ENCODE measurements at regions of chr1 and their contacts with region 1.

Region 1: DNA sequence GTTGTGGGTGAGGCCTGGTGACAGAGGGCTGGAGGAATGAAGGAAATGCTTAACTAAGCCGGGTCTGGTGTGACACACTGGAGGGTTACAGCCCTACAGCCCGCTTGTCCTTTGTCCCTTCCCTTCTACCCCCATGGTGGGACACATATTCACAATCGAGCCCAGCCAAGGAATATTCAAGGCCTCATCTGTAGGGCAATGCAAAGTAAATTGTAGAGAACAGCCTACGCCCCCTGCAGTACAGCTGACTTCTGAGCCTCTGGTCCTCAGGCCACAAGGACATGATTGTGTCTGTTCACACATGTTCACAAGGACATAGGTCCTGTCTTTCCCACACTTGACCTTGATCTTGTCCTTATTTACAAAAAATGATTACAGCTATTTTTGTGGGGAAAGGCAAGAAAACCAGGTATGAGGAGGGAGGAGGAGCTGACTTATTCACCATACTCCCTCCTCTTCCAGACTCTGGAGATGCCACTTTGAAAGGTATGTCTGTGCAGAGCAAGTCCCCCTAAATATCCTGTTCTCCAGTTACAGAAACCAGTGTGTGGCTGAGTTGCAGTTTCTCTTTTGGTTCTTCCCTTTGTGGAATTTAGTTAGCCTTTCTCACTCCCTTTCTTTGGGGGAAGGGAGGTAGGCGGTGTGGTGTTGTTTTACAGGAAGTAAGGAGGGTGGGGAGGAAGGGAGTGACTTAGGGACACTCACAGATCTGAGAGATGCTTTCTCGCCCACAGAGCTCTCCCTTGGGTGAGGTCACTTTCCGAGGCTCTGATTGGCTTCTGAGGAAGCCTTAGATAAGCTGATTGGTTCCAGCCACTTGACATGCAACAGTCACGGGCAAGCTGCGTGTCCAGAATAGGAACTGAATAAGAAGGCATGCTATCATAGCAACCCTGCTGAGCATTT is 14.6 kb downstream of the POLR3GL start:
- DNase-seq: peak; percentile 100
- H3K4me3 ChIP-seq: peak overlapping the region; percentile 31
- CTCF ChIP-seq: peak; percentile 42

Region 2: GRCh38 chr1:145765574-145765973 is 213.5 kb before region 1 on chr1:
- CTCF ChIA-PET with region 1: no interaction called
- POLR2A ChIA-PET with region 1: no interaction called
- DNase-seq: no peak
- H3K4me3 ChIP-seq: no peak overlapping the region
- CTCF ChIP-seq: no peak

Region 3: GRCh38 chr1:145804235-145805045 is 174.7 kb before region 1 on chr1:
- CTCF ChIA-PET with region 1: no interaction called
- POLR2A ChIA-PET with region 1: no interaction called
- DNase-seq: no peak
- H3K4me3 ChIP-seq: no peak overlapping the region
- CTCF ChIP-seq: no peak

Region 4: GRCh38 chr1:145963995-145964901 is 14.9 kb before region 1 on chr1 and contains the starts of genes ANKRD34A and POLR3GL:
- CTCF ChIA-PET with region 1: interaction called, 130 read pairs
- POLR2A ChIA-PET with region 1: interaction called, 15 read pairs
- DNase-seq: no peak
- H3K4me3 ChIP-seq: peak within 1 kb of the TSS; percentile 93
- CTCF ChIP-seq: no peak

Region 5: DNA sequence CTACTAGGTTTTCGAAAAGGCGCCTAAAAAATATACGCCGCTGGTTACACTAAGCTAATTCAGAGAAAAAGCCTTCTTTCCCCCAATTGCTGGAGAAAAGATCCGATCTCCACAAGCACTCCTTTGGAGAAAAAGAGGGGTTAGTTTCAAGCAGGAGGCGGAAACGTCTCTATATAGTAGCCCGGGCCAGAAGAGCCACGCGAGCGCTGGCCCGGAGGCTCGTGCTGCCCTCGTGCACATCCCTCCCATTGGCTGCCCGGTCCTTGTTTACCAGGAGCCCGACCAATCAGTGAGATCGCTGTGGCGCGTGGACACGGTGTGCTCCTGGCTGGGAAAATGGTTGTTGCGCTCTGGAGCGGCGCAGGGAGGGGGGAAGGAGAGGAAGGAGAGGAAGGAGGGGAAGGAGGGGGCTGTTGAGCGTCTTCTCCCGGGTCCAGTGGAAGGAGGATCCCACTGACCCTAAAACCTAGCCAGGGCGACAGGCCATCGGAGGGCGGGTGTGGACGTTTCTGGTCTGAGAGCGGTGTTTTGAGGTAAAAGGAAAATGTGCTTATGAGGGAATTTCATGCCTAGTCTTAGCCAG is 17.4 kb after region 1 on chr1 and contains the start of gene TXNIP:
- CTCF ChIA-PET with region 1: interaction called, 787 read pairs
- POLR2A ChIA-PET with region 1: interaction called, 3 read pairs
- DNase-seq: peak; percentile 77
- H3K4me3 ChIP-seq: peak within 1 kb of the TSS; percentile 90
- CTCF ChIP-seq: no peak

Region 6: DNA sequence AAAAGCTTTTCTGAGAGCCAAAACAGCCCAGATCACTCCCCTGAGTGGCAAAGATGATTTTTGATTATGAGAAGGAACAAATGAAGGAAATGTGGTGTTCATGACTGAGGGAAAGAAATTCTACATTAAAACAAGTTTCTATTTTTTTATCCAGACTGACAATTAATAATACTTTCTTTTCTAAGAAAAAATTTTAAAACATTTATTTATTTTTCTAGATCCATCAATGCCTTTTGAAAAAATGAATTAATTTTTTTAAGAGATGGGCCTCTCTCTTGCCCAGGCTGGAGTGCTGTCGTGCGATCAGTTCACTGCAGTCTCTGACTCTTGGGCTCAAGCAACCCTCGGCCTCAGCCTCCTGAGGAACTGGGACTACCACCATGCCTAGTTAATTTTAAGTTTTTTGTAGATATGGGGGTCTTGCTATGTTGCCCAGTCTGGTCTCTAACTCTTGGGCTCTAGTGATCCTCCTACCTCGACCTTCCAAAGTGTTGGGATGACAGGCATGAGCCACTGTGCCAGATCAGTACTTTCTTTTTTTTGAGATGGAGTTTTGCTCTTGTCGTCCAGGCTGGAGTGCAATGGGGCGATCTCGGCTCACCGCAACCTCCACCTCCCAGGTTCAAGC is 28.5 kb after region 1 on chr1:
- CTCF ChIA-PET with region 1: interaction called, 787 read pairs
- POLR2A ChIA-PET with region 1: interaction called, 10 read pairs
- DNase-seq: no peak
- H3K4me3 ChIP-seq: no peak overlapping the region
- CTCF ChIP-seq: no peak

Region 7: DNA sequence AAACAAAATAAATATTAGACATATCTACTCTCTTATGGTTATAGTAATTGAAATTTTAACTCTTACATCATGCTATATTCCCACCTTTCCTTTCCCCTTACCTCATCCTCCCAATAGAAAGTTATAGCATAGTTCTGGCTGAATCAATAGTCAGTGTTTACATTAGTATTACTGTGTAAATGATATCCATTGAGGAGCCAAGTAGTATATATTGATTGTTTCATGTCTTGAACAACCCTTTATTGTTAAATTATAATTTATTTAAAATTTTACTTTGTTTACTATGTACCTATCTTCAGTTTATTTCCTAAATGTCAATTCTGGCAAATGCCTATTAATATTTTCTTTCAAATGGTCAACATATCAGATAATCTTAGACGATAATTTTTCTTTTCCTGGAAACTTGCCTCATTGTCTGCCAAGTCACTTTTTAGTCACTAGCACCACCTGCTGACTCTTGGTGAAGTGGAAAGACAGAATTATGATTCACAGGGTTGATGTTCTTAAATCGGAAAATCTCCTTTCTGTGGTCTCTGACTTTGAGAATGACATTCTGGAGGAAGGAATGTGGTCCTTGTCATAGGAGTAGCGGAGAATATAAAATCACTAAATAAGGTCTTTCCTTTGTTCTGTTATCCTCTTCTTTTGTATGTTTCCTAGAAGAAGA is 33.8 kb after region 1 on chr1:
- CTCF ChIA-PET with region 1: interaction called, 787 read pairs
- POLR2A ChIA-PET with region 1: no interaction called
- DNase-seq: no peak
- H3K4me3 ChIP-seq: no peak overlapping the region
- CTCF ChIP-seq: peak; percentile 53

Region 8: DNA sequence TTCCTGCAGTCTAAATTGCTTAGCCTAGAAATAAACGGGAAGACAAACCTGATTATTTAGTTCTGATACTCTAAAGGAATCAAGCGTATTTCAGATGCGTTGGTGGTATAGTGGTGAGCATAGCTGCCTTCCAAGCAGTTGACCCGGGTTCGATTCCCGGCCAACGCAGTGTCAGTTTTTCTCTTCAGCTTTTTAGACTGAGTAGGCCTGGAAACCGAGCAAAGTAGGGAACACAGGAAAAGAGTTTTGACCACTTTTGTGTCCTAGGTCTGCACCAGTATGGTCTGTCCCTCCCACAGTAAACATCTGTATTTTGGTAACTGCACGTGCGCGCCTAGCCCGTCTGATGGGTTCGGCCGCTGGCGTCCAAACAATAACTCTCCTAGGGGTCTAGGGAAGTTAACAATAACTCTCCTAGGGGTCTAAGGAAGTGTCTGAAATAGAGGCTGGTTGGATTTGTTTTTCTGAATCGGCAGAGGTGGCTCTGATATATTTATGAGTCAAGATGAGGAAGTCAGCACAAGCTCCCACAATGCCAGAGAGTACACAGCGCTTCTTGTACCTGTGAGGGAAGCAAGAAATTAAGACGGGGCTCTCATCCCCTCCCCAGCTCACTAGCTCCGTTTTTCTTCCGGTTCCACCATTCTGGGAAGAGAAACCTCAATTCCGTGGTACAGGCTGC is 58.0 kb after region 1 on chr1:
- CTCF ChIA-PET with region 1: interaction called, 28 read pairs
- POLR2A ChIA-PET with region 1: interaction called, 3 read pairs
- DNase-seq: peak; percentile 37
- H3K4me3 ChIP-seq: peak overlapping the region; percentile 72
- CTCF ChIP-seq: no peak

Measured in AG04449 (cell line).